Activated T-helper 2 cell treated with anti-CD3 and anti-CD28 coated beads, Interferon-gamma antibody, Interleukin-2, Interleukin-4, amounts not matched to agents 10 μg/mL and 5 μg/mL and 100 μg/mL, durations not matched to agents 14 hours and 24 hours and 36 hours (primary cell): ENCODE measurements at regions of chr22 and their contacts with region 1.

Region 1: GRCh38 chr22:25623310-25623734 is 58.8 kb downstream of the GRK3 start:
- DNase-seq: no peak
- H3K4me3 Mint-ChIP-seq: no peak overlapping the region
- H3K27ac Mint-ChIP-seq: peak overlapping the region; percentile 45
- H3K4me1 Mint-ChIP-seq: peaks cover 59% of the 10 kb centered on the region
- H3K27me3 Mint-ChIP-seq: no peaks in the 10 kb centered on the region

Region 2: GRCh38 chr22:25572708-25573171 is 50.6 kb before region 1 on chr22:
- intact Hi-C with region 1: loop called (anchors 2 kb)
- DNase-seq: no peak
- H3K4me3 Mint-ChIP-seq: no peak overlapping the region
- H3K27ac Mint-ChIP-seq: peak overlapping the region; percentile 80
- H3K4me1 Mint-ChIP-seq: peaks cover 61% of the 10 kb centered on the region
- H3K27me3 Mint-ChIP-seq: no peaks in the 10 kb centered on the region

Region 3: GRCh38 chr22:25669253-25670069 is 46.1 kb after region 1 on chr22:
- intact Hi-C with region 1: loop called (anchors 5 kb)
- DNase-seq: no peak
- H3K4me3 Mint-ChIP-seq: no peak overlapping the region
- H3K27ac Mint-ChIP-seq: peak overlapping the region; percentile 33
- H3K4me1 Mint-ChIP-seq: peaks cover 26% of the 10 kb centered on the region
- H3K27me3 Mint-ChIP-seq: no peaks in the 10 kb centered on the region

Region 4: GRCh38 chr22:25680956-25681355 is 57.6 kb after region 1 on chr22:
- intact Hi-C with region 1: no loop called
- DNase-seq: no peak
- H3K4me3 Mint-ChIP-seq: no peak overlapping the region
- H3K27ac Mint-ChIP-seq: peak overlapping the region; percentile 58
- H3K4me1 Mint-ChIP-seq: peaks cover 31% of the 10 kb centered on the region
- H3K27me3 Mint-ChIP-seq: no peaks in the 10 kb centered on the region